ENCODE measurements at regions of chr9 and their contacts with region 1.

Region 1: GRCh38 chr9:75185585-75186170 is 97.4 kb downstream of the OSTF1 start:
- DNase-seq: peak; percentile 68
- ATAC-seq: peak; percentile 65
- H3K4me3 Mint-ChIP-seq: no peak overlapping the region
- H3K27ac Mint-ChIP-seq: no peak overlapping the region
- H3K4me1 Mint-ChIP-seq: peaks cover 22% of the 10 kb centered on the region
- H3K27me3 Mint-ChIP-seq: peaks cover under 1% of the 10 kb centered on the region

Region 2: DNA sequence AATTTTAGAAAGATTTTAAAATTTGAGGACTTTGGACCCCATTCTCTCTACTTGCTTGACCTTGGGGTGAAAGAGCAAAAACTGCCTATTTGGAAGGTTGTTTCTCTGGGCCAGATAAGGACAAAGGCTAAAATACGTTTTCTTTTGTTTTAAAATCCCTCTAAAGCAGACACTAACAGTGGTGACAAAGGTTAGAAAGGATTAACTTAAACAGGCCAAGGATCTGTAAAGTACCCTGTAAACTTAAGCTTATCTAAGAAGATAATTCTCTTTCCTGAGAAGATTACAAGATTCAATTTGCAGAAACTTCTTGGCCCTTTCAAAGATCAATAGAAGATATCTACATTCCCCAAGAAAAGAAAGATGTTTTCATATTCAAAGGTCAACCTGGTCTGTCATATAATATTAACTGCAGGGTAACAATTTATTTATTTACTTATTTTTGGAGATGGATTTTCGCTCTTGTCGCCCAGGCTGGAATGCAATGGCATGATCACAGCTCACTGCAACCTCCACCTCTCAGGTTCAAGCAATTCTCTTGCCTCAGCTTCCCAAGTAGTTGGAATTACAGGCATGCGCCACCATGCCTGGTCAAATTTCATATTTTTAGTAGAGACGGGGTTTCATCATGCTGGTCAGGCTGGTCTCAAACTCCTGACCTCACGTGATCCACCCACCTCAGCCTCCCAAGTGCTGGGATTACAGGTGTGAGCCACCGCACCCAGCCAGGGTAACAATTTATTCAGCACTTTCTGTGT is 309.8 kb before region 1 on chr9:
- CTCF ChIA-PET with region 1: no interaction called
- POLR2A ChIA-PET with region 1: no interaction called
- DNase-seq: no peak
- ATAC-seq: no peak
- H3K4me3 Mint-ChIP-seq: no peak overlapping the region
- H3K27ac Mint-ChIP-seq: no peak overlapping the region
- H3K4me1 Mint-ChIP-seq: no peaks in the 10 kb centered on the region
- H3K27me3 Mint-ChIP-seq: peaks cover 4% of the 10 kb centered on the region

Region 3: DNA sequence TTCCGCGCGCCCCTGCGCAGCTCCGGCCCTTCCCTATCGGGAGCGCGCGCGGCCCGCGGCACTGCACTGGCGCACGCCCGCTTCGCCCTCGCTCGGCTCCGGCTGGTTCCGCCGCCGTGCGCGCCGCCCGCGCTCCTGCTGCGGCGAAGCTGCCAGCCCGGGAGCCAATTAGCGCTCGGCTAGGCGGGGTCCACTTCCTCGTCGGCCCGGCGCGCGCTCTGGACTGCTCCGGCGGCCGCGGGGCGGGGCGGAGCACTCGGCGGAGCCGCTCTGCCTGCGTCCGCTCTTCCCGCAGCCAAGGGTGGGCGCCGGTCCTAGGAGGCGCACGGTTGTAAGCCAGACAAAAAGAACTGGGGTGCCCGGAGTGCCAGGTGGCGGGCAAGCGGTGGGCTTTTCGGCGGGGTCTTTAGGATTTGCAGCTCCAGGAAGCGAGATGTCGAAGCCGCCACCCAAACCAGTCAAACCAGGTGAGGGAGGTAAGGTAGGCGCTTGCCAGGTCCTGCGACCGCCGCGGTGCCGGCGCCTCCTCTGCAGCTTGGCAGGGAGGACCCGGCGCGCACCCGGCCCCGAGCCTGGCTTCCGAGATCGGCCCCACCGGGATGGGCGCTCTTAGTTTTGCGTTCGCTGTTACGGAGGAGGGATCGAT is 97.3 kb before region 1 on chr9 and contains the start of gene OSTF1:
- CTCF ChIA-PET with region 1: interaction called, 23 read pairs
- POLR2A ChIA-PET with region 1: no interaction called
- DNase-seq: peak; percentile 94
- ATAC-seq: peak; percentile 92
- H3K4me3 Mint-ChIP-seq: peak within 1 kb of the TSS; percentile 95
- H3K27ac Mint-ChIP-seq: peak within 1 kb of the TSS; percentile 97
- H3K4me1 Mint-ChIP-seq: peaks cover 62% of the 10 kb centered on the region
- H3K27me3 Mint-ChIP-seq: no peaks in the 10 kb centered on the region
- total RNA-seq, gene OSTF1: 126 to 132 TPM

Region 4: GRCh38 chr9:75148561-75148960 is 37.1 kb before region 1 on chr9:
- CTCF ChIA-PET with region 1: interaction called, 22 read pairs
- POLR2A ChIA-PET with region 1: no interaction called
- DNase-seq: peak; percentile 44
- ATAC-seq: peak; percentile 55
- H3K4me3 Mint-ChIP-seq: peak overlapping the region; percentile 54
- H3K27ac Mint-ChIP-seq: peak overlapping the region; percentile 96
- H3K4me1 Mint-ChIP-seq: peaks cover 85% of the 10 kb centered on the region
- H3K27me3 Mint-ChIP-seq: no peaks in the 10 kb centered on the region

Region 5: DNA sequence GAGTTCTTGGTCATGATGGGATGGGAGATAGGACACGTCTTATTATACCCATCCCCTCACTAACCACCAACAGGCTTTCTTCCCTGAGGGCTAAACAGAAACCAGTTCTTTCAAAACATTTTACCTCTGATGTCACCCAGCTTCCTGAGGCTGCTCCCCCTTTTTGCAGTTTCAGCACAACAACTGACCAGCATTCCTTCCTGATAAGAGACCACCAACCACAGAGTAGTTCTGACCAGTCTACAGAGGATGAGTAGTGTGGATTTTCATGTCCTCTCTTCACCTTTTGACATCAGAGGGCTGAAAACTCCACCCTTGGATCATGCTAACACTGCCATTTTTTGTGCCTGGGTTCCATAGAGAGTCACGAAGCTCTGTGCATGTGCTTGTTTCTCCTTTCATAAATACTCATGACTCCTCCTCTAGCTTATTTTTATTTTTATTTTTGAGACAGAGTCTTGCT is 14.7 kb before region 1 on chr9:
- CTCF ChIA-PET with region 1: interaction called, 77 read pairs
- POLR2A ChIA-PET with region 1: interaction called, 3 read pairs
- DNase-seq: no peak
- ATAC-seq: peak; percentile 51
- H3K4me3 Mint-ChIP-seq: no peak overlapping the region
- H3K27ac Mint-ChIP-seq: peak overlapping the region; percentile 71
- H3K4me1 Mint-ChIP-seq: peaks cover 59% of the 10 kb centered on the region
- H3K27me3 Mint-ChIP-seq: no peaks in the 10 kb centered on the region

Region 6: DNA sequence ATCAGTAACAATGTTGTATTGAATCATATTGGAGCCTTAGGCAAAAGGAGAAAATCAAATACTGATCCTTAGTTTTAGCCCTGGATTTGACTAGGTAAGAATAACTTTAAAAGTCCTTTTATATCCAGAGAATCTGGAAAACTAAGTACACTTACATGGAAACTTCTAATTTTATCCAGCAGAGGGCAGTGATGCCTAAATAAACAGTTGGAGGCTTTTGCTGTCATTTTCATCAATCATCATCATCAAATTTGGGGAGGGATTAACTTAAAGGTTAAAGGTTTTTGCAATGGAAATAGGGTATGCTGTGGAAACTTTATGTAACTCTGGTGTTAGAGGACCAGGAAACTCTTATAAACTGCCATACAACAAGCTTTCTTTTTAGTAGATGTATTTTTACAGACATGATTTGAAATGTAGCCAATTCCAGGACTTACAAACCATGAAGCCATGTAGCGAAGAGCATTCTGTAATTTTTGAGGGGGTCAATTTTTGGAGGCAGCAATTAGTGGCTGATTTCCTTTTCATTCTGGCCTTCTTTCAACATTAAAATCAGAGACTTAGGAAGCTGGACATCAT is 15.3 kb after region 1 on chr9:
- CTCF ChIA-PET with region 1: interaction called, 29 read pairs
- POLR2A ChIA-PET with region 1: no interaction called
- DNase-seq: peak; percentile 31
- ATAC-seq: no peak
- H3K4me3 Mint-ChIP-seq: no peak overlapping the region
- H3K27ac Mint-ChIP-seq: no peak overlapping the region
- H3K4me1 Mint-ChIP-seq: no peaks in the 10 kb centered on the region
- H3K27me3 Mint-ChIP-seq: peaks cover 2% of the 10 kb centered on the region